Sciatic nerve (tissue), 2 donors: ENCODE measurements at regions of chr5 and their contacts with region 1.

Region 1: GRCh38 chr5:152046361-152046760 is 121.7 kb upstream of the GLRA1 start:
- DNase-seq: no peak
- ATAC-seq: no peak

Region 2: DNA sequence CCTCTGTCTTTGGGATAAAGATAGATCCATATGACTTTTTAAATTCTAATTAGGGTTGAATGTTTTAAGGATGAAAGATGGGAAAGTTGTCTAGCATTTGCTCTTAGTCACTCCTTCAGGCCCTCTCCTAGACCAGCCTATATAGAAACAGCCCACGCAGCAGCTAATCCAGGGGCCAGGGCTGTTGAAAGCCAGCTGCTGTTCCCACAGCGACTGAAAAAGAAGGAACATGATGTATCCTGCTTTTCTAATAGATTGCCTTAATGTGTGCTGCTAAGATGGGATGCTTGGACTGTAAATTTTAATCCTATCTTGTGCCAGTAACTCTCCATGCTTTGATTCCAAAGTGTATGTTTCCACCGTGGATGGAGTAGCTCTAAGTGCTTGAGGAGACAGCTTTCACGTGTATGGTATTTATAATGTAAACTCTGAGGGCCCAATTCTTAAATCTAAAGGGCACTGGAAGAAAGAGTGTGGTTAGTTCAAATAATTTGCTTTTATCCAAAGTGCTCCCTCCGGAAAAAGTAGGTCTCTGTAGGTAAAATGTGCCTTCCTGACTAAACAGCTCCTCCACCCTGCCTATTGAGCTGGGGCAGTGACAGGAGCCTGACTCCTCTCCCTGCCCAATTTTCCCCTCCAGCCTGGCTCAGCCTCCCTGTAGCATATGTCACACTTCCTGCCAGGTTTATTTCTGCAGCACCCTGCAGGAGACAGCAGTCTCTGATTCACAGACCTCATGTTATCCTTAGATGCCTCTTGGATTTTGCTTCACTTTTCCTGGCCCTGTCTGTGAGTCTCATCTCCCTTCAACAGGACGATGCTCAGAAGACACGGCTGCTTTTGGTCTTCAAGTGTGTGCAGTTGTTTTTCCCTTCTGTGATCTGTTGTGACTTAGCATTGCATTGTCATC is 565.7 kb before region 1 on chr5:
- intact Hi-C with region 1: no loop called
- DNase-seq: no peak
- ATAC-seq: peak; percentile 47

Region 3: DNA sequence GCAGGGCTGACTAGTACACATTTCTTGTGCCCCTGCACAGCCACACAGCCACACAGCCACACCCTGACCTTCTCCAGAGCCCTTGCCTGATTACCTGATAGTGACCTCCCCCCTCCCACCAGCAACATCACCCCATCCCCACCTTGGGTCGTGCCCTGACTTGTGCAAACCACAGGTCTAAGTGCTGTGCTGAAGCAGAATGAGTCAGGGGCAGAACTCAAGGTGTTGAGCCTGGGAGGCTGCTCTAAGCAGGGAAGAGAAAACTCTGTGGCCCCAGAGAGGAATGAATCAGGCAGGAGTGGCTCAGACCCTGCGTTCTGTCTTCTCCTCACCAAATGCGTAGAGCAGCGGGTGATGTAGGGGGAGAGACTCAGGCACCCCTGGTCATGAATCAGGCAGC is 430.9 kb before region 1 on chr5:
- intact Hi-C with region 1: no loop called
- DNase-seq: no peak
- ATAC-seq: no peak

Region 4: GRCh38 chr5:152016421-152016820 is 29.9 kb before region 1 on chr5:
- intact Hi-C with region 1: loop called (anchors 1 kb)
- DNase-seq: no peak
- ATAC-seq: no peak